Activated naive CD8-positive, alpha-beta T cell treated with anti-CD3 and anti-CD28 coated beads, Interleukin-2, amount 10 ng/mL, durations not matched to agents 7 days and 5 days (primary cell): ENCODE measurements at regions of chr9 and their contacts with region 1.

Region 1: GRCh38 chr9:128159784-128160602 is at the start of gene BBLN:
- DNase-seq: peak; percentile 92
- ATAC-seq: peak; percentile 87
- H3K4me3 Mint-ChIP-seq: peak within 1 kb of the TSS; percentile 82
- H3K27ac Mint-ChIP-seq: peak within 1 kb of the TSS; percentile 91
- H3K4me1 Mint-ChIP-seq: peaks cover 15% of the 10 kb centered on the region
- H3K27me3 Mint-ChIP-seq: no peaks in the 10 kb centered on the region
- total RNA-seq, gene BBLN: 77.6 to 90.9 TPM

Region 2: DNA sequence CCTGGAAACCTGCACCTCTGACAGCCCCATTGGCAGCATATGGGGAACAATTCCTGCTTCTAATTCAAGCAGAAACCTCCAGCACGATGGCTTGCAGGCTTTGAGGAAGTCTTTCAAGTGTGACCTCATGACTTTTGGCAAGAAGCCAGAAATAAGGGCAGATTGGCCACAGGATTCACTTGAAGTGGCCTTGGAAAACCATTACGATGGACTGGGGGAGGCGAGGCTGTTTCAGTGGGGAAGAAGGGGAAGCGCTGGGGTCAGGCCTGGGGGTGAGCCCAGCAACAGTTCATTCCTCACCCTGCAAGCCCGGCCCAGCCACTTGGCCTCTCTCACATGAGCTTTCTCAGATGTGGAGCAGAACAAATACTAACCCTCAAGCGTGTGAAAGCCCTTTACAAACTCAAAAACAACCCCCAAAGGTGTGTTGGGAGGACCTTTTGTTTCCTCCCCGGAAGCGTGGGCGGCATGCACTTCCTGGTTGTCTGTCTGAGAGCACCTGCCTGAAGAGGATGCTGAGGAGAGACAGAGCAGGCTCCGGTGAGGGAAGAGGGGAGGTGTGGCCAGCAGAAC is 152.3 kb before region 1 on chr9:
- POLR2A ChIA-PET with region 1: no interaction called
- DNase-seq: peak; percentile 77
- ATAC-seq: peak; percentile 86
- H3K4me3 Mint-ChIP-seq: peak overlapping the region; percentile 77
- H3K27ac Mint-ChIP-seq: peak overlapping the region; percentile 93
- H3K4me1 Mint-ChIP-seq: peaks cover 34% of the 10 kb centered on the region
- H3K27me3 Mint-ChIP-seq: no peaks in the 10 kb centered on the region

Region 3: GRCh38 chr9:128191406-128192046 is 31.5 kb after region 1 on chr9 and contains the start of gene CIZ1:
- POLR2A ChIA-PET with region 1: interaction called, 22 read pairs
- DNase-seq: peak; percentile 88
- ATAC-seq: peak; percentile 87
- H3K4me3 Mint-ChIP-seq: peak within 1 kb of the TSS; percentile 96
- H3K27ac Mint-ChIP-seq: peak within 1 kb of the TSS; percentile 93
- H3K4me1 Mint-ChIP-seq: peaks cover 29% of the 10 kb centered on the region
- H3K27me3 Mint-ChIP-seq: peaks cover 6% of the 10 kb centered on the region
- total RNA-seq, gene CIZ1: 149 to 152 TPM